ENCODE measurements at regions of chr1 and their contacts with region 1.

Region 1: GRCh38 chr1:113072757-113073478 is at the start of gene LRIG2:
- DNase-seq: peak; percentile 99
- ATAC-seq: peak; percentile 95
- H3K4me3 ChIP-seq: peak within 1 kb of the TSS; percentile 97
- H3K27ac ChIP-seq: peak within 1 kb of the TSS; percentile 66
- H3K4me1 ChIP-seq: peaks cover 9% of the 10 kb centered on the region
- H3K27me3 ChIP-seq: no peaks in the 10 kb centered on the region
- CTCF ChIP-seq: peak; percentile 90
- total RNA-seq, gene LRIG2: 6.1 and 8.4 TPM in 2 replicates

Region 2: DNA sequence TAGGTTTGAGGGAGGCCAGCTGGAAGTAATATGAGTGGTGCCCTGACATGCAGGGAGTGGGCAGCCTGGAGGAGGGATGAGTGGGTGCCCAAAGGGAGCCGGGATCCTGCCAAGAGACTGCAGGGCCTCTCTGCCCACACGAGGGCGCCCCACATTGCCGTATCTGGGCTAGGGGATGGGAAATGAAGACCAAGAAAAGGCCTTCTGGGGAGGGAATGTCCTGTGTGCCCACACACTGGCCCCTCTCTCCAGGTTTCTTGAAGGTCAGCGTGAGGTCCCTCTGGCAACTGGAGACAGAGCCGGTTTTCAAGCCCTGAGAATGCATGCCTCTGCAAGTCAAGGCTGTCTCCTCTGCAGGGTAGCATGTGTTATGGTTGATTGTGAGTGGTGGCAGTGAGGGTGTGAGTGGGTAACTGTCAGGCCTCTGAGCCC is 263.6 kb before region 1 on chr1:
- CTCF ChIA-PET with region 1: no interaction called
- POLR2A ChIA-PET with region 1: no interaction called
- intact Hi-C with region 1: loop called (anchors 2 kb)
- DNase-seq: peak; percentile 86
- ATAC-seq: peak; percentile 92
- H3K4me3 ChIP-seq: no peak overlapping the region
- H3K27ac ChIP-seq: no peak overlapping the region
- H3K4me1 ChIP-seq: 0 out of 2 replicates have a peak, but pooled peaks cover 6% of the 10 kb centered on the region
- H3K27me3 ChIP-seq: no peaks in the 10 kb centered on the region
- CTCF ChIP-seq: peak; percentile 96

Region 3: GRCh38 chr1:112955781-112956543 is 117.0 kb before region 1 on chr1 and contains the start of gene SLC16A1:
- CTCF ChIA-PET with region 1: interaction called, 11 read pairs
- POLR2A ChIA-PET with region 1: no interaction called
- intact Hi-C with region 1: no loop called
- DNase-seq: peak; percentile 92
- ATAC-seq: peak; percentile 75
- H3K4me3 ChIP-seq: peak within 1 kb of the TSS; percentile 82
- H3K27ac ChIP-seq: peak within 1 kb of the TSS; percentile 68
- H3K4me1 ChIP-seq: peaks cover 28% of the 10 kb centered on the region
- H3K27me3 ChIP-seq: no peaks in the 10 kb centered on the region
- CTCF ChIP-seq: 0 out of 2 replicates have a peak, but pooled peaks have one; percentile 11
- total RNA-seq, gene SLC16A1: 103 and 116 TPM in 2 replicates

Region 4: GRCh38 chr1:113057006-113057405 is 15.9 kb before region 1 on chr1:
- CTCF ChIA-PET with region 1: interaction called, 13 read pairs
- POLR2A ChIA-PET with region 1: interaction called, 29 read pairs
- intact Hi-C with region 1: no loop called
- DNase-seq: no peak
- ATAC-seq: peak; percentile 40
- H3K4me3 ChIP-seq: no peak overlapping the region
- H3K27ac ChIP-seq: no peak overlapping the region
- H3K4me1 ChIP-seq: no peaks in the 10 kb centered on the region
- H3K27me3 ChIP-seq: no peaks in the 10 kb centered on the region
- CTCF ChIP-seq: no peak

Region 5: GRCh38 chr1:113389953-113390834 is 317.3 kb after region 1 on chr1 and contains the start of gene MAGI3:
- CTCF ChIA-PET with region 1: no interaction called
- POLR2A ChIA-PET with region 1: no interaction called
- intact Hi-C with region 1: loop called (anchors 5 kb)
- DNase-seq: peak; percentile 98
- ATAC-seq: peak; percentile 81
- H3K4me3 ChIP-seq: peak within 1 kb of the TSS; percentile 75
- H3K27ac ChIP-seq: peak within 1 kb of the TSS; percentile 42
- H3K4me1 ChIP-seq: peaks cover 37% of the 10 kb centered on the region
- H3K27me3 ChIP-seq: no peaks in the 10 kb centered on the region
- CTCF ChIP-seq: no peak
- total RNA-seq, gene MAGI3: 7.2 and 10.7 TPM in 2 replicates

Measured in PC-3 (cell line).